ENCODE measurements at regions of chr1 and their contacts with region 1.

Region 1: DNA sequence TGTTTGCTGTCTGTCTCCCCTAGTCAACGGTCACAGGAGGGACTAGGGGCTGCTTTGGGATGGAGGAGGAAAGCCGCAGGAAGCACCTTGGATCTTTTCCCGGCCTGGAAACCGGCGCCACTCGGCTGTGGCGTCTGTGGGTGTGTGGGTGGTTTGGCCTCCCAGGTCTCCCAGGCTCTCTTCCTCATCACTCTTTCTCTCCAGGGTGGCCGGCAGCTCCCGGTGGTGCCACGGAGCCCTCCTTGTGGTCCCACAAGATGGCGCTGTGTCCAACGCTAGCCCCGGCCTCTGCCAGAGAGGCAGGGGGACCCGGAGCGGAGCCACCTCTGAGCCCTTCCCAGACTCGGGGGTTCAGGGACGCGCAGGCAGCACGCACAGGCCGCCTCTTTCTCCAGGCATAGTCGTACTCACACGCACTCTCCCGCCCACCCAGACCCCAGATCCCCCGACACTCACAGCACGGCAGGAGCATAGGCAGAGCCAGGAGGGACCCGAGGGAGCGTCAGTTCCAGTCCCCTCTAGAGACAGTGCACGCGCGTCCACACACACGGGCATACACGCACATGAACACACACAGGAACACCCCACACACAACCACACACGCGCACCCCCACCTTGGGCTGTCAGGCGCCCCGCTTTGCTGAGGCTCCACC is 31.2 kb downstream of the CDCP2 start:
- DNase-seq: peak; percentile 76 to 80 (median 77)
- H3K4me3 ChIP-seq: peak overlapping the region; percentile 14 to 76 (median 51)
- H3K27ac ChIP-seq: peak overlapping the region in 1 of 2 experiments; percentile 12
- H3K4me1 ChIP-seq: peaks cover 0 to 34% (median 24%) of the 10 kb centered on the region in 4 experiments
- H3K27me3 ChIP-seq: no peaks in the 10 kb centered on the region

Region 2: DNA sequence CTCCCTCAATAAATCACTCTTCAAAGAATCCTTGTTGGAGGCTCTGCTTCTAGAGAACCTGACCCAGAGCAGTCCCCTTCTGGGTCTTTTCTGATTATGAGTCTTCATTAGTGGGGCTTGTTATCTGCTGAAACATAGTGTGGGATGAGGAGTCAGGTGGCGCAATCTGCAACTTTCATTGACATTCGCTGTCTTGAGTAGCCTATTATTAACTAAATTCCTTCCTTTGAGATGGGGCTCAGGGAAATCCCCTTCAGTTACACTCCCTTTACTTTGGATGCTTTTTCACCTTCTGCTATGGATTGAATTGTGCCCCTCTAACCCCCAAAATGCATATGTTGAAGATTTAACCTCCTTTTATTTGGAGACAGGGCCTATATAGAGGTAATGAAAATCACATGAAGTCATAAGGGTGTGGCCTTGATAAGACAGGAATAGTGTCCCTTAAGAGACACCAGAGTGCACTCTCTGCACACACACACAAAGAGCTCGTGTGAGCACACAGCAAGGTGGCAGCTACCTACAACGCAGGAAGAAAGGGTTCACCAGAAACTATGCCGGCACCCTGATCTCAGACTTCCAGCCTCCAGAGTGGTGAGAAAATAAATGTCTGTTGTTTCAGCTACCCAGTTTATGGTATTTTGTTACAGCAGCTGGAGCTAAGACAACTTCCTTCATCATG is 208.1 kb before region 1 on chr1:
- CTCF ChIA-PET with region 1: no interaction called
- POLR2A ChIA-PET with region 1: no interaction called
- DNase-seq: no peak
- H3K4me3 ChIP-seq: no peak overlapping the region
- H3K27ac ChIP-seq: no peak overlapping the region
- H3K4me1 ChIP-seq: no peaks in the 10 kb centered on the region
- H3K27me3 ChIP-seq: no peaks in the 10 kb centered on the region

Region 3: DNA sequence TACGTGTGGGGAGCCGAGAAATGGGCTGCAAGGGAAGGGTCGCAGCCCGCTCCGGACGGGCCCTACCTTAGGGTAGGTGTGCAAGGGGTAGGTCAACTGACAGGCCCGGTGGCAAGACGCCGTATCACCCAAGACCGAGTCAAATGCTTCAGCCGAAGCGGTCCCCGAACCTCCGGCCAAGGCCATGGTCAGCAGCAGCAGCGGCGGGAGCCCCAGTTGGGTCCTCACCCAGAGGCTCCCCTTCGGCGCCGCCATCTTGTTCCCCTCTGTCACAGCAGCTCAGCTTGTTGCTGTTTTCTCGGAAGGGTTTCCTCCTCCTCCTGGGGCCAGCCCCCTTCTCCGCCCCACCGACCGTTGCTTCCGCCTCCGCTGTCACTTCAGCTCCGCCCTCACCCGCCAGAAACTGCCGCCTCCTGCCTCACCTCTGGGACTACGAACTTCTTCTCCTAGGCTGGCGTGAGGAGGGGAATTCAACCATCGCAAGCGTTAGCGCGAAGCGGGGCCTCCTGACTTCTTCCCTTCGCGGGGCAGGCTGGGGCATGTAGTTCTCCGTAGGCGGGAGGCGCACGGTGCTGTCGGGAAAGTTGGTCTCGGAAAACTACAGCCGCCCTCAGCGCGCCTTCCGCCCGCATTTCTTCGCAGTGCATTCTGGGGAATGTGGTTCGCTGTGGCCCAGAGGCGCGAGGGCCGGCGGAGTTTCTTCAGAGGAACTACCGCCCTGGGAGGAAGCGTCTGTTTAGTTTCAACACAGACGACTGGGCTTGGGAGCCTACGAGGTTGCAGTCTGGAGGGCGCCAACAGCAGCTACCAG is 68.5 kb before region 1 on chr1 and contains the starts of genes TCEANC2 and TMEM59:
- CTCF ChIA-PET with region 1: no interaction called
- POLR2A ChIA-PET with region 1: no interaction called
- DNase-seq: peak; percentile 100
- H3K4me3 ChIP-seq: peak within 1 kb of the TSS; percentile 94 to 100 (median 98)
- H3K27ac ChIP-seq: peak within 1 kb of the TSS; percentile 91 to 96
- H3K4me1 ChIP-seq: peaks cover 11 to 53% (median 29%) of the 10 kb centered on the region in 4 experiments
- H3K27me3 ChIP-seq: no peaks in the 10 kb centered on the region

Region 4: DNA sequence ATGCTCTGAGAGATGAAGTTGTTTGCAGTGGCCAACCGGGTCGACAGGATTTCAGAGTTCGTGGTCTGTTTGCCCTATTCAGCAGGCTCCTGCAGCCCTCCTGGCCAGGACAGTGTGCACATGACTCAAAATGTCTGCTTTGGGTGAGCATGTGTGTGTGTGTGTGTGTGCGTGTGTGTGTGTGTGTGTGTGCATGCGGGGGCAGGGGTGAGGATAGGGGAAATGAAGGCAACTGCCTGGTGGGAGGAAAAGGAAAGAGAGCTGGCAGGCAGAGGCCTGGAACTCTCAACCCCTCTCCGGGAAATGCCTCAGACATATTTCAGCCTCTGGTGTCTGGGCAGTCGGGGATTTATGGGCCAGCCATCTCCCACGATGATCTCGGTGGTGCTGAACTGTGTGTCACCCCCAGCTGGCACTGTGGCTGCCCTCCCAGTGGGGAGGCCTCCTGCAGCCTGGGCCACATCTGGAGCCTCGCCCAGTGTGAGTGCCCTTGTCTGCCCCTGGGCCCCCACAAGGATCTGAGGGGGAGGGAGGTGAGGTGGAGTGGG is 16.0 kb after region 1 on chr1:
- CTCF ChIA-PET with region 1: interaction called, 38 read pairs
- POLR2A ChIA-PET with region 1: no interaction called
- DNase-seq: peak; percentile 9 to 57 (median 41)
- H3K4me3 ChIP-seq: no peak overlapping the region
- H3K27ac ChIP-seq: no peak overlapping the region
- H3K4me1 ChIP-seq: peaks cover 0 to 17% (median 10%) of the 10 kb centered on the region in 4 experiments
- H3K27me3 ChIP-seq: no peaks in the 10 kb centered on the region

Region 5: DNA sequence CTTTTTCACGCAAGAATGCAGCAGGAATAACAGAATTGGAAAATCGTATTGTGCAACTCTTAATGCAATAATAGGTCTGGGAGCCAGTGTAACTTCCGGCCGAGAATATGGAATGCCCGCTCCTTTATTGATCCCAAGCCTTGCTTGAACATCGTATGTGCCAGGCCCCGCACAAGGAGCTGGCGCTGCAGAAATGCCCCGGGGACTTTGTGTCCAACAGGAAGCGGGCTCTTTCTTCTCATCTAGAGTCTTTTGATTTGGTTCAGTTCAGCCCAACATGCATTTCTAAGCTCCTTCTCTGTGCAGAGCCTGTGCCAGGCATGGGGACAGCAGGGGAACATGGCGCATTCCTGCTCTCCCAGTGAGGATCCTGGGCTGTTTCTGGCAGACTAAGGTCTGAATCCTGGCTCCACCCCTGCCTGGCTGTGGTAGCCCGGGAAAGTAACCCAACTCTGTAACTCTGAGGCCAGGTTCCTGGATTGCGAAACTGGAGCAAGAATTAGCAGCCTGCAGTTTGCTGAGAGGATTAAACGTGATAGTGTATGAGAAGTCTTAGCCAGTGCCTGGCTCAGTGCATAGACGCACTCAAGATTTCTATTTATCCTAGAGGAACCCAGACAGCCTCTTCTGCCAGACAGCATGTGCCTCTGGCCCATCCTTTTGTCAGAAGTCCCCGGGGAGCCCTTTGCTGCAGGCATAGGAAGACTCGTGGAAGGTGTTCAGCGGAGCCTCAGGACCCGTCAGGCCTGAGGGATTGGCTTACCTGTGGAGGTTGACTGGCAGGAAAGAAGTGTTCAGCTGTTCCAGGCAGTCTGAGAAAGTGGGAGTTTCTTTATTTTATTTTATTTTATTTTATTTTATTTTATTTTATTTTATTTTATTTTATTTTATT is 32.2 kb after region 1 on chr1:
- CTCF ChIA-PET with region 1: no interaction called
- POLR2A ChIA-PET with region 1: no interaction called
- DNase-seq: no peak
- H3K4me3 ChIP-seq: no peak overlapping the region
- H3K27ac ChIP-seq: no peak overlapping the region
- H3K4me1 ChIP-seq: peaks cover 0 to 11% (median 5%) of the 10 kb centered on the region in 4 experiments
- H3K27me3 ChIP-seq: no peaks in the 10 kb centered on the region

Region 6: DNA sequence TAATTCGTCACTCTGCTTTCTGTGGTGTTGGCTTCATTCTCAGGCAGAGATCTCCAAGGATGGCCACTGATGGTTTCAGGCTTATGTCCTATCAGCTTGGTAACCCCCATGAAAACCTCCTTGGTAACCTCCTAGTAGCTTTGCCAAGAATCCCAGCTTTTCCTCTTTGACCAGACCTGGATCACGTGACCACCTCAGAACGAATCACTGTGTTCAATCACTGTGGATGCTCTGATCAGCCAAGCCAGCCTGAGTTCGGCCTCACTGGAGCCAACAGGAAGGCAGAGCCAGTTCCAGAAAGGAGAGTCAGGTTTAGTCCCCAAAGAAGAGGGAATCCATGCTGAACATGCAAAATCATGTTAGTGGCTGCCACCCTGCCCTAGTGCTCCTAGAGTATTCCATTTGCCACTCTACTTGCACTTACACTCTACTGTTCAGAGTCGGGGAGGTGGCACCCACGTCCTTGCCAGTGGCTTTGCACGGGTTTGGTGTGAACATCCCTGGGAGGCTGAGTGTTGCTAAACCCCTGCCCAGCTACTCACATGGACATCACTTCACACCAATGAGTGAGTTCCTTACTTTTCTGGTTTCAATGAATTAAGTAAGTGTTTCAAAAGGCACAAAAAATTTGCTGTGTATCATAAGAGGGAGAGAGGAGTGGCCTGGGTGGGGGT is 318.1 kb after region 1 on chr1:
- CTCF ChIA-PET with region 1: no interaction called
- POLR2A ChIA-PET with region 1: no interaction called
- DNase-seq: no peak
- H3K4me3 ChIP-seq: no peak overlapping the region
- H3K27ac ChIP-seq: no peak overlapping the region
- H3K4me1 ChIP-seq: no peaks in the 10 kb centered on the region
- H3K27me3 ChIP-seq: no peaks in the 10 kb centered on the region